H1 (cell line): ENCODE measurements at regions of chr4 and their contacts with region 1.

Region 1: GRCh38 chr4:152500800-152501434 is 35.0 kb downstream of the FBXW7 start:
- DNase-seq: peak in 1 of 2 experiments; percentile 27
- H3K4me3 ChIP-seq: no peak overlapping the region
- H3K27ac ChIP-seq: no peak overlapping the region
- H3K4me1 ChIP-seq: no peaks in the 10 kb centered on the region
- H3K27me3 ChIP-seq: no peaks in the 10 kb centered on the region
- CTCF ChIP-seq: peak in 2 of 3 experiments; percentile 55 to 73; a peak in 2 of 4 replicates
- EP300 ChIP-seq: no peak
- POLR2A ChIP-seq: no peak
- RAD21 ChIP-seq: peak; percentile 82 to 86

Region 2: DNA sequence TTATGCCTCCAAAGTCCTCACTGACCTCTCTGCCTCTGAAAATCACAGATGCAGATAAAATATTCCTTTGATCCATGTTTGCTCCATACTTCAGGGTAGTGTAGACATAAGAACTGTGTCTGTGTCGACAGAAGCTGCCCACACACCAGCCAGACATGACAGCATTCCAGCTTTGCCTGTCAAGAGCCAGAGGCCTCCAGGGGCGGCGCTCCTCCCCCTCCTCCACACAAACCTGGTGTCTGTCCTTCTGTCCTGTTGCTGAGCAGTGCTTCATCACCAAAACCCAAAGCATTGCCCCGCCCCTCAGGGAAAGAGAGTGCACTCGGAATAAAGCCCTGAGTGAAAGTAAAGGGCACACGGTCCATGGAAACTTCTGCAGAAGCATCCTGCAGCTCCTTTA is 344.5 kb before region 1 on chr4:
- CTCF ChIA-PET with region 1: no interaction called
- POLR2A ChIA-PET with region 1: no interaction called
- DNase-seq: no peak
- H3K4me3 ChIP-seq: no peak overlapping the region
- H3K27ac ChIP-seq: no peak overlapping the region
- H3K4me1 ChIP-seq: no peaks in the 10 kb centered on the region
- H3K27me3 ChIP-seq: no peaks in the 10 kb centered on the region
- CTCF ChIP-seq: no peak
- EP300 ChIP-seq: no peak
- POLR2A ChIP-seq: no peak
- RAD21 ChIP-seq: no peak

Region 3: GRCh38 chr4:152485726-152486276 is 15.1 kb before region 1 on chr4:
- CTCF ChIA-PET with region 1: interaction called, 14 read pairs
- POLR2A ChIA-PET with region 1: no interaction called
- DNase-seq: no peak
- H3K4me3 ChIP-seq: no peak overlapping the region
- H3K27ac ChIP-seq: no peak overlapping the region
- H3K4me1 ChIP-seq: no peaks in the 10 kb centered on the region
- H3K27me3 ChIP-seq: no peaks in the 10 kb centered on the region
- CTCF ChIP-seq: no peak
- EP300 ChIP-seq: no peak
- POLR2A ChIP-seq: no peak
- RAD21 ChIP-seq: no peak

Region 4: GRCh38 chr4:152577708-152578396 is 76.9 kb after region 1 on chr4:
- CTCF ChIA-PET with region 1: interaction called, 17 read pairs
- POLR2A ChIA-PET with region 1: no interaction called
- DNase-seq: no peak
- H3K4me3 ChIP-seq: no peak overlapping the region
- H3K27ac ChIP-seq: no peak overlapping the region
- H3K4me1 ChIP-seq: no peaks in the 10 kb centered on the region
- H3K27me3 ChIP-seq: no peaks in the 10 kb centered on the region
- CTCF ChIP-seq: no peak
- EP300 ChIP-seq: no peak
- POLR2A ChIP-seq: no peak
- RAD21 ChIP-seq: no peak

Region 5: GRCh38 chr4:152640058-152640833 is 139.3 kb after region 1 on chr4:
- CTCF ChIA-PET with region 1: interaction called, 65 read pairs
- POLR2A ChIA-PET with region 1: interaction called, 3 read pairs
- DNase-seq: no peak
- H3K4me3 ChIP-seq: no peak overlapping the region
- H3K27ac ChIP-seq: no peak overlapping the region
- H3K4me1 ChIP-seq: peaks cover 0 to 10% (median 5%) of the 10 kb centered on the region in 4 experiments; a peak in 4 of 7 replicates
- H3K27me3 ChIP-seq: no peaks in the 10 kb centered on the region
- CTCF ChIP-seq: peak in 2 of 3 experiments; percentile 29 to 39; a peak in 2 of 4 replicates
- EP300 ChIP-seq: no peak
- POLR2A ChIP-seq: no peak
- RAD21 ChIP-seq: peak; percentile 48 to 62

Region 6: GRCh38 chr4:152735396-152735859 is 234.5 kb after region 1 on chr4:
- CTCF ChIA-PET with region 1: interaction called, 33 read pairs
- POLR2A ChIA-PET with region 1: no interaction called
- DNase-seq: no peak
- H3K4me3 ChIP-seq: no peak overlapping the region
- H3K27ac ChIP-seq: no peak overlapping the region
- H3K4me1 ChIP-seq: peaks cover 0 to 4% (median 2%) of the 10 kb centered on the region in 4 experiments; a peak in 3 of 7 replicates
- H3K27me3 ChIP-seq: no peaks in the 10 kb centered on the region
- CTCF ChIP-seq: peak in 2 of 3 experiments; percentile 11 to 53; a peak in 2 of 4 replicates
- EP300 ChIP-seq: no peak
- POLR2A ChIP-seq: no peak
- RAD21 ChIP-seq: peak; percentile 71 to 76